ENCODE measurements at regions of chr17 and their contacts with region 1.

Region 1: GRCh38 chr17:64164596-64165285 is 34.8 kb upstream of the ERN1 start:
- DNase-seq: peak; percentile 46
- H3K4me3 ChIP-seq: no peak overlapping the region
- H3K27ac ChIP-seq: peak overlapping the region in 1 of 2 experiments; percentile 88; a peak in 2 of 4 replicates
- H3K4me1 ChIP-seq: peaks cover 0 to 38% of the 10 kb centered on the region in 2 experiments; a peak in 2 of 4 replicates
- H3K27me3 ChIP-seq: no peaks in the 10 kb centered on the region
- CTCF ChIP-seq: no peak
- EP300 ChIP-seq: no peak; a peak in 1 of 4 replicates
- RAD21 ChIP-seq: no peak

Region 2: GRCh38 chr17:64091116-64091515 is 73.6 kb before region 1 on chr17:
- CTCF ChIA-PET with region 1: no interaction called
- POLR2A ChIA-PET with region 1: no interaction called
- DNase-seq: no peak
- H3K4me3 ChIP-seq: no peak overlapping the region
- H3K27ac ChIP-seq: no peak overlapping the region
- H3K4me1 ChIP-seq: no peaks in the 10 kb centered on the region
- H3K27me3 ChIP-seq: no peaks in the 10 kb centered on the region
- CTCF ChIP-seq: no peak
- EP300 ChIP-seq: no peak
- RAD21 ChIP-seq: no peak

Region 3: DNA sequence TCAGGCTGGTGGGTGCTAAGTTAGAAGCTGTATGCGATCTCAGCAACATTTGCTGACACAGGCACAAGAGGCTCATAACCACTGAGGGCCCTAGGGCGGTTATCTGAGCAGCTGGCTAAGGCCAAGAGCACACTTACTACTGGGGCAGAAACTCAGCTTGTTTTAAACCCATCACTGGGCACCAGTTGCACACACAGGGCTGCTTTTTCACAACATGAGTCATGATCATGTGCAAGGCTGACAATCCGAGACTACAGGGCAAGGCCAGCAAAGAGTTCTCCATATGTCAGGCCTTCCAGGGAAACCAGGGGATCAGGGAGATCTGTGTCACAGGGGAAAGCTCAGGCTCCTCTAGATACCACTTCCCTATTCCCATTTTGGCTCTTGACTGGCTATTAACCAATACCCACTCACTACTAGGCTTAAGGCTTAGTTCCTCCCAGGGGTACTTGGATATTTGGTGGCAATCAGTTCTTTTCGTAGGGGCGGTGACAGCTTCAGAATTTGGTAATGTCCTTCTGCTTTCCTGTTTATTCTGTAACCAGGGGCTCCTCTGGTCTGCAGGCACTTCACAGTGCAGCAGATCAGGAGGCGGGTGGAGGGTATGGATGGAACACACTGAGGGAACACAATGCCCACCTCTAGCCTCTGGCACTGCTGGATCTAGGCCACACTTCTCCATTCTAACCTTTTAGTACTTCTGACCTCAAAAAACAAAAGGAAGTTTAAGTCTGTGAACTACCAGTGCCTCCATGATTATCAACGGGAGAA is 10.1 kb after region 1 on chr17:
- CTCF ChIA-PET with region 1: interaction called, 16 read pairs
- POLR2A ChIA-PET with region 1: interaction called, 26 read pairs
- DNase-seq: no peak
- H3K4me3 ChIP-seq: no peak overlapping the region
- H3K27ac ChIP-seq: peak overlapping the region in 1 of 2 experiments; percentile 41; a peak in 1 of 4 replicates
- H3K4me1 ChIP-seq: peaks cover 16 to 42% of the 10 kb centered on the region in 2 experiments; a peak in 3 of 4 replicates
- H3K27me3 ChIP-seq: no peaks in the 10 kb centered on the region
- CTCF ChIP-seq: no peak
- EP300 ChIP-seq: no peak
- RAD21 ChIP-seq: no peak

Region 4: GRCh38 chr17:64520359-64520758 is 355.6 kb after region 1 on chr17:
- CTCF ChIA-PET with region 1: no interaction called
- POLR2A ChIA-PET with region 1: no interaction called
- DNase-seq: no peak
- H3K4me3 ChIP-seq: no peak overlapping the region
- H3K27ac ChIP-seq: no peak overlapping the region
- H3K4me1 ChIP-seq: no peaks in the 10 kb centered on the region
- H3K27me3 ChIP-seq: no peaks in the 10 kb centered on the region
- CTCF ChIP-seq: no peak
- EP300 ChIP-seq: no peak
- RAD21 ChIP-seq: no peak